AG04449 (cell line): ENCODE measurements at regions of chr1 and their contacts with region 1.

Region 1: DNA sequence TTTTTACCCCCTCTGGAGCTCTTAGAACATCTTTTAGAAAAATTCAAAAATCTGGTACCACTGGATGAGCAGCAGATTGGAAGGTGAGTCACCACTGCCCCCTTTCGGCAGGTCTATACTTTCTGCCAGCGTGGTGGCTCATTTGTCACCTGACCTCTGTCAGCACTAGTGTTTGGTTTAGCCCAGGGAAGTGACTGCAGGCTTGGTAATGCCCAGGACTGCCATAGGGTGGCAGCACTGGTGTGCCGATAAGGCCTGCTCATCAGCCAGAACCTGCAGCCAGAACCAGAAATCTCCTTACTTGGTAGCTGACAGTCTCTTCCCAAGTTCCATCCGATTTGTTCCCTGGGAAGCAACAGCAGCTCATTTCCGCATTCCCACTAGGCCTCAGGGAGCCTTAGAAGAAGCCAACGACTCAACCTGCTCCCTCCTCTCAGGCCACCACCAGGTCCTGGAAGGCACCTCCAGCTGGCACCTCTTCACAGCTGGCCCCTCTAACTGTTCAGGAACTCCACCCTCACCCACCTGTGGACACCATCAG is 6.8 kb downstream of the SMIM12 start:
- DNase-seq: peak; percentile 82
- H3K4me3 ChIP-seq: no peak overlapping the region
- CTCF ChIP-seq: peak; percentile 86

Region 2: DNA sequence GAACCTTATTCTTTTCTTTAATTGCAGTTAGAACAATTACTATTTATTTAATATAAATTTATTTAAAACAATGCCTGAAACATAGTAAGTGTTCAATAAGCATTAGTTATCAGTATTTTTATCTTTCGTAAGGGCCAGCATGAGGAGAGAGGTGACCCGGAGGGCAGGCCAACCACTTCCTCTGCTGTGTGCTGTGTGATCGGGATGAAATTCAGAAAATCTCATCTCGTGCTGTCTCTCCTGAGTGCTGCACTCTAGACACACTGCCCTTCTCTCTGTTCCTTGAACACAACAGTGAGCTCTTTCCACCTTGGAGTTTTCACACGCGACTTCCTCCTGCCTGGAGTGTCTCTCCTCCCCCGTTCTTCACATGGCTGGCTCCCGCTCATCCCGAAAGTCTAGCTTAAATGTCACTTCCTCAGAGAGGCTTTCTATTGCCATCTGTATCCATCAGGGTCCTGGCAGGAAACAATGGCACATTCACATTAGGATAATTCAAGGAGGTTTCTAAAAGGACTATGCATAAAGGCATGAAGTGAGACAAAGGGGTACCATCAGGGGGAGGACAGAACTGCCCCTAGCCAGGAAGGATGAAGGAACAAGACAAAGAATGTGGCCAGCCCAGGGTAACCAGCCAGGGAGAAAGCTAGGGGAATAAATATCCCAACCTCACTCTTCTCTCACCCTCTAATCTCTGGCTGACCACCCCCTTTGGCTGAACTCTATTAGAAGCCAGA is 240.5 kb before region 1 on chr1:
- CTCF ChIA-PET with region 1: no interaction called
- POLR2A ChIA-PET with region 1: no interaction called
- DNase-seq: no peak
- H3K4me3 ChIP-seq: no peak overlapping the region
- CTCF ChIP-seq: no peak

Region 3: DNA sequence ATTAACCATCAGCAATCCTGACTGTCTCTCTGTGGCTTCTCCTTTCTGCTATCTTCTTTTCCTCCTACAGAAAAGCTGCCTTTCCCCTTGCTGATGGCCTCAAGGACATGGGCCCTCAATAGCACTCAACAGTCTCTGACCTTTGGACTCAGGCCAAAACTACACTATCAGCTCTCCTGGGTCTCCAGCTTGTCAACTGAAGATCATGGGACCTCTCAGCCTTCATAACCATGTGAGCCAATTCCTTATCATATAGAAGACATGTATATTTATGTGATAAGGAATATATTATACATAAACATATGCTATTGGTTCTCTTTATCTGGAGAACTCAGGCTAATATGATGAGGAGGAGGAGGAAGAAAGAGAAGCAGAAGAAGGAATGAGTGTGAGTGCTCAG is 189.7 kb before region 1 on chr1:
- CTCF ChIA-PET with region 1: no interaction called
- POLR2A ChIA-PET with region 1: no interaction called
- DNase-seq: no peak
- H3K4me3 ChIP-seq: no peak overlapping the region
- CTCF ChIP-seq: no peak

Region 4: DNA sequence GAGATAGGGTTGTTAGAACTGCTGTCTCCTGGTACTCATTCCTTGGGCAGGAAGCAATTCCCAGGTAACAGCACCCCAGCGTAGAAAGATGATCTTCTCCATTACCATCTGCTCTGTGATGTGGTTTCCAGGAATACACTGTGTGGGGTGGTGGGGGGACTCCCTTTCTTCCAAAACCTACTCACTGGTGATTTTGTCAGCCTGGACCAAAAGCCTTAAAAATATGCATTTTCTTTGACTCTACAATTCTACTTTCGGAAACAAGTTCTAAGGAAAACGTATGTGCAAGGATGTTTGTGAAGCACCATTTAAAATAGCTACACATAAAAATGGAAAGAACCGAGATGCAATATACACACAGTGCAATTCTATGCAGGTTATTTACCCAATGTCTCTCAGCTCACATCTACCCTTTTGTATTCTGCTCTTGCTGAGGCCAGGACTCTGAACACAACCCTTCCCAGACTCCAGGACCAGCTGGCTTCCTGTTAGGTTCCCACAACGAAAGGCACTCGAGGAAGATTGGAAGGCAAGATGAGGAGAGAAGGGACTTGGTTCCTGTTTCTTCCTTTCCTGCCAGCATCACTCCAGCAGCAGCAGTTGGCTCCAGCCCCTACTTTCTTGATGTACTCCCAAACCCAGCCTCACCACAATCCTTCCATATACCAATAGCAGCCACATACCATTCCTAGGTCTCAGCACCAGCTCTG is 130.9 kb before region 1 on chr1:
- CTCF ChIA-PET with region 1: no interaction called
- POLR2A ChIA-PET with region 1: no interaction called
- DNase-seq: no peak
- H3K4me3 ChIP-seq: no peak overlapping the region
- CTCF ChIP-seq: no peak

Region 5: DNA sequence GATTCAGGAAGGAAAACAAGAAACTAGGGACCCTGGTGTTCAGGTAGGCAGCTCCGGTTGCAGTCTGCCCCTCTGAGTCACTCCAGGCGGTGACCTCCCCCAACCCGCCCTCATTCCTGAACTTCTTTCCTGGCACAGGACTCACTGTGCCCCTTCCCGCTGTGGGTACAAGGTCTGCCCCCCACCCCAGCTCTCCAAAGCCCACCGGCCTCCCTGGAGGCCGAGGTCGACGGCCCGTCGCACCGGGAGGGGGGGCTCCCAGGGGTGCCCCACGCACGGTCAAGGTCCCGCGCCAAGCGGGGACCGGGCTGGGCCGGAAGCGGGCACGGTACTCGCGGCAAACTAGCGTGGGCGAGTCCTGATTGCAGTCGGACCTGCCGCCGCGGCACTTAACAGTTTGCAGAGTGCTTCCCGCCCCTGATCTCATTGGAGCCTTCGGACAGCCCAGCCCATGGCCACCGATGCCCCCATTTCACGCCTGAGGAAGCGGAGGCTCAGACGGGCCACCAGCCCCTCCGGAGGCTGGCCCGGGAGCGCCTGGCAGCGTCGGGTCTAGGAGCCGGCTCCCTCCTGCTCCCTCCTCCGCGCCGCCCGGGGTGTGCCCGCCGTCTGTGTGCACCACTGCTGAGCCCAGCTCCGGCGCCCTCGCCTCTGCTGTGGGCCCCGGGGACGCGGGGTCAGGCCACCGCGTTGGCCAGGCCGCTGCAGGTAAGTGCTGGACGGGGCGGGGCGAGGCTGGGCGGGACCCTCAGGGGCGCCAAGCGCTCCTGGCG is 71.5 kb before region 1 on chr1 and contains the start of gene GJB3:
- CTCF ChIA-PET with region 1: interaction called, 37 read pairs
- POLR2A ChIA-PET with region 1: no interaction called
- DNase-seq: no peak
- H3K4me3 ChIP-seq: no peak within 1 kb of the TSS
- CTCF ChIP-seq: no peak

Region 6: DNA sequence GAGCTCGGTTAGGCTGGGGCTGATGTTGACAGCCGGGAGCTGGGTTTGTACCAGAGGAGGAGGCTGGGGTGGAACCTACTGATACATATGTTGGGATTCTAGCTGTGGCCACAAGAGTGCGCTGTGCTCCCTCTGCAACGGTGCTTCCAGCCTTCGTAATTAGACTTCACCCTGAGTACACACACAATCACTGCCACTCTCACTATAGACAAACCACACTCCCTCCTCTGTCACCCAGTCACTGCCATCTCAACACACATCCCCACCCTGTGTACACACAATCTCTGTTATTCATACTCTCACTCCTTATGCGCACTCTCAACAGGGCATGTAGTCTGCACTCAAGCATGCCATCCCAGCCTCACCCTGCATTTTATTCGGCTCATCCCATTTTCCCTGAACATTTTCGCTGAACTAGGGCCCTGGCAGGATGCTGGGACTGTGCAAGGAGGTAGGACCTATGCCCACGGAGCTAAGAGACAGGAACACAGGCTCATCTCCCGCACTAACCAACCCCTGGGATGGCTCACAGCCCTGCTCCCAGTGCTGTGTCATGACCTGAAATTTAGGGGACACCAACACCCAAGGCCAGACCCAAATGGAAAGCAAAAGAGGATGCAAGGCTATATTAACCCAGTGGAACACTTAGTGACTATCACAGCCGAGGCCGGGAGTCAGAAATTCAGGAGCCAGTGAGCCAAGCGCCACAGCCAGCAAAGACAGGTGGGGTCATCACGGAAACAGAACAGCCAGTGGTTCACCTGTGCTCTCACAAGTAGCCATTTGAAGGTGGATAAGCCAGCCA is 66.0 kb before region 1 on chr1:
- CTCF ChIA-PET with region 1: interaction called, 37 read pairs
- POLR2A ChIA-PET with region 1: no interaction called
- DNase-seq: peak; percentile 24
- H3K4me3 ChIP-seq: no peak overlapping the region
- CTCF ChIP-seq: peak; percentile 88

Region 7: DNA sequence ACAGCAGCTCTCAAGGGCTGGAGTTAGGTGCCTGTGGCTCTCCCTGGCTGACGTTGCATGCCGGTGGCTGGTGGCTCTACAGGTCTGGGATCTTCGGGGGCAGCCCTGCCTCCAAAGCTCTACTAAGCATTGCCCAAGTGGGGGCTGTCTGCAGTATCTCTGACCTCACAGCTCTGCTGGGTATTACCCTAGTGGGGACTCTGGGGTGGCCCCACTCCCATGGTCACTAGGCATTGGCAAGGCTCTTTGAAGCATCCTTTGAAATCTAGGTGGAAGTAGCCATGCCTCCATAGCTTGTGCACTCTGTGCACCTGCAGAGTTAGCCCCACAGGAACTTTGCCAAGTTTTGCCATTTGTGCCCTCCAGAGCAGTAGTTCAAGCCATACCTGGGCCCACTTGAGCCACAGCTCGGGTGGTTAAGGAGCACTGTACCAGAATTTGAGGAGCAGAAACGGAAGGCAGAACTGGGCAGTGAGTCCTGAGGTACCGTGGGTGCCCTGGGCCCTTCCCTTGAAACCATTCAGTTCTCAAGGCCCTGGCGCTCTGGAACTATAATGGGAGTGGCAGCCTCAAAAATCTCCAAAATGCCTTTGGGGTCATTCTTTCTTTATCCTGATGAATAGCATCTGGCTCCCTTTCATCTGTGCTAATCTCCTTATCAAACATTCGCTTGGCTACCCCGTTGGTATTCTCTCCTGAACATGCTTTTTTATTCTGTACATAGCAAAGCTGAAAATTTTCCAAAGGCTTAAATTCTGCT is 44.5 kb before region 1 on chr1:
- CTCF ChIA-PET with region 1: interaction called, 20 read pairs
- POLR2A ChIA-PET with region 1: no interaction called
- DNase-seq: no peak
- H3K4me3 ChIP-seq: no peak overlapping the region
- CTCF ChIP-seq: no peak

Region 8: GRCh38 chr1:34829250-34829649 is 23.5 kb before region 1 on chr1:
- CTCF ChIA-PET with region 1: interaction called, 25 read pairs
- POLR2A ChIA-PET with region 1: no interaction called
- DNase-seq: no peak
- H3K4me3 ChIP-seq: no peak overlapping the region
- CTCF ChIP-seq: no peak

Region 9: DNA sequence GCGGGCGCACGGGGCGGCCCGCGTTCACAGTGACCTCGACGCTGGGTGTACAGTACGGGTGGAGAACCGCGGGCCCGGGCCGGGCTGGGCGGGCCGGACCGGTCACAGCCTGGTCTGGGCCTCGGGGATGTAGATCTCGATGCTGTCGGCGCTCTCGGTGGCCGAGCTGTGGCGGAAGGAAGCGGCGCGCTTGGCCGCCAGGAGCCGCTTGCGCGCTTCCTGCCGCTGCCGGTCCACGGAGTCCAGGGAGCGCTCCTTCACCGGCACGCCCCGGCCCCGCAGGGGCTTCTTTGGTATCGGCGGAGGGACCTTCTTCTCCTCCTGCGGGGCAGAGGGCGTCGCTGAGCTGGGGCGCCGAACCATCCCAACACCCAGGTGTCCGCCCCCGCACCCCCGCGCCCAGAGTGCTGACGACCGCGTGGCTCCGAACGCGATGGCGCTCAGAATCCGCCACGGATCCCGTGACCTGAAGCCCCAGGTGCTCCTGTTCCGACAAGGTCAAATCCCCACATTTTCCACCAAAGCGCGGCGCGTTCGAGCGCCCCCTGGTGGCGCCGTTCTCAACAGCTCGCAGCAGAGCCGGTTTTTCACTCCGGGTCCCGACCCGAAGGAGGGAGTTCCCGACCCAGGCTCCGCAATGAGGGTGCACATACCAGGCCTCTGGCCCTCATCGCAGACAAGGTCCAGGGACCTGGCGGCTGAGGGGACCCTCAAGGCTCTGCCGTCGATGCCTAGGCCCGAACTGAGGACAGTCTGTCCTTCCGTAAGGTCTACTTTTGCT is 13.4 kb after region 1 on chr1:
- CTCF ChIA-PET with region 1: interaction called, 158 read pairs
- POLR2A ChIA-PET with region 1: no interaction called
- DNase-seq: no peak
- H3K4me3 ChIP-seq: peak overlapping the region; percentile 73
- CTCF ChIP-seq: peak; percentile 91

Region 10: DNA sequence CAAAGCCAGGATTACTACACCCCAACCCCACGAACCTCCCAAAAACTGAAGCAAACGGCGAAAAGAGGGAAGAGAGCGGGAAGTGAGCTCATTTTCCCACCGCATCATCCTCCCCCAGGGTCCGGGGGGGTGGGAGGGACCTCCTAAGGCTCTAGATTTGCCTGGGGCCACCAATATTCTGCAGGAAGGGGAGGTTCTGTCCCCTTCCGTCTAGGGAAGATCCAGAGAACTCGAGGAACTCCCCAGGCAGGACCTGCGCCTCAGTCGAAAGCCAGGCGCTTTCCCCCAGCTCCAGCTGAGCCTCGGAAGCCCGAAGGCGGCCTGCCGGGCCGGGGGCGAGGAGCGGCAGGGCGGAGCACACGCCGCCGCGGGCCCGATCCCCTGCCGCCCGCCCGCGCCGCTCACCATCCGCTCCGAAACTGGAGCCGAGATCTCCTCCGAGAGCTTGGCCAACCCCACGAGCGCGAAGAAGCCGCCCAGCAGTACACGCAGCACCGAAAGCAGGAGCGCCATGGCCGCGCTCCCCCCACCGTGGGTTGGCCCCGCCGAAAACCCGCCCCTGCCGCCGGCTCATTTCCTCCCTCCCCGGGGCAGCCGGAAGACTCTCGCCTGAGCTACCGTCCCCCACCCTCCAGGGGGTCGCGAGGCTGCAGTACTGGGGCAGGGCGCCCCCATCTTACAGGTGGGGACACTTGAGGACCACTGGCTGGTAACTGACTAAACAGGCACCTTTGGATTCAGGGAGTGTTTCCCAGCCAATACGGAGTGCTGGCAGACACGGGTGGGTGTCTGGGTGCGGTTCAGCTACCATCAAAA is 132.3 kb after region 1 on chr1 and contains the start of gene TMEM35B:
- CTCF ChIA-PET with region 1: interaction called, 12 read pairs
- POLR2A ChIA-PET with region 1: no interaction called
- DNase-seq: no peak
- H3K4me3 ChIP-seq: peak within 1 kb of the TSS; percentile 77
- CTCF ChIP-seq: peak; percentile 24

Region 11: DNA sequence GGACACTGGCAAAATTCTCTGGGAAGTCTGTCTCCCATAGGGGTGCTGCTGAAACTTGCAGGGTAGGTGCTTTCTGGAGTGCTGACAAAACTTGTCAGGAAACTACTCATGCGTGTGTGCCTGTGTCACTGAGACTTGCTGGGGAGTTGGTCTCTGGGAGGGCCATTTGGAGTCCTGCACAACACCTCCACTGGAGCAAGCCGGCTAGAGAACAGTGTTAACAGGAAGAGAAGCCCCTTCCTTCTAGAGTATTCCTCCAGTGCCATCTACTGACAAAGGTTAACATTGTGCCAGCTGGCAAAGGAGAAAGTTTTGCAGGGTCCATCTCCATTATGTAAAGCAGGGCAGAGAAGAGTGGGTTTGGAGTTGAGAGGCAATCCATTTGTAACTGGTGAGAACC is 445.7 kb after region 1 on chr1:
- CTCF ChIA-PET with region 1: no interaction called
- POLR2A ChIA-PET with region 1: no interaction called
- DNase-seq: no peak
- H3K4me3 ChIP-seq: no peak overlapping the region
- CTCF ChIP-seq: peak; percentile 45